HCT116 (cell line): ENCODE measurements at regions of chr18 and their contacts with region 1.

Region 1: DNA sequence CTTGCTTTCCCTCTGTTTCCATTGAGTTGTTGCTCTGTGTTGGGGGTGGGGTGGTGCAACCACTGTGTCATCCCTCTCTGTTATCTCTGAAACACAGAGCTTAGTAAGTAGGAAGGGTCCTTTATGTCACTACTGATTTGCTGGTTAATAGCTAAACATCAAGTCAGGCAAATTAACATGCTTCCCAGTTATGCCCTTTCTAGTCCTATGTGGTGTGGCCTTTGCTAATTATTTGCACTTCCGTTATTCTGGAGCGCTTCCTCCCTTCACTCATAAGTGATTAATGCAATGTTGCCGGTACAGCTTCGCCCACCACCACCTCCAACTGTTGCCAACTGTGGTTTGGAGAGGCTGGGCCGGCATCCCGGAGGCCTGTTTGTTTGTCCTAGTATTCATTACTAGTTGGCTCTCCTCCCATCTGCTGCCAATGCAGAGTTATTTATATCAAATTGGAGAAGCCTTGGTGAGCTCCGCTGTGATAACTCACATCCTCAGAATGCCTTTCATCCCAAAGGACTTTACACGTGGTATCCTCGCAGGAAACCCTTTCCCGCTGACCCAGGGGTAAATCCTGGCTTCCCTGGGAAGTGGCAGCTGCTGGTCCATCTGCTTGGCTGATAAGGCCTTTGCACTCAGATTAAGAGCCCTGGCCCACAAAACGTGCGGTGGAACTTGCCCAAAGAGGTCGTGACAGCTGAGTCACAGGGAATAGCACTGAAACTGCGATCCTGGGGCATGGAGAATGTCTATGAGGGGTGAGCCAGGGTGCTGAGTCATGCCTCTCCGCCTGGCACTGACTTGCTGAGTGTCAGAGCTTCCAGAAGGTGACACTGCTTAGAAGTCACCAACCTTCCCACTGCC is 72.0 kb upstream of the ZCCHC2 start:
- DNase-seq: peak; percentile 86
- ATAC-seq: peak; percentile 96
- H3K4me3 ChIP-seq: peak overlapping the region in 1 of 2 experiments; percentile 12; a peak in 2 of 4 replicates
- H3K27ac ChIP-seq: peak overlapping the region; percentile 83
- H3K4me1 ChIP-seq: peaks cover 30 to 36% of the 10 kb centered on the region in 2 experiments
- H3K27me3 ChIP-seq: no peaks in the 10 kb centered on the region
- CTCF ChIP-seq: 0 out of 6 replicates have a peak, but pooled peaks of 1 of the 3 experiments have one; percentile 7
- POLR2A ChIP-seq: no peak
- RAD21 ChIP-seq: no peak; the same call in 1 of the 2 replicates

Region 2: GRCh38 chr18:62486304-62486964 is 35.7 kb after region 1 on chr18:
- CTCF ChIA-PET with region 1: no interaction called
- POLR2A ChIA-PET with region 1: no interaction called
- RAD21 ChIA-PET with region 1: interaction called in 1 of 2 experiments, 5 read pairs
- intact Hi-C with region 1: loop called (anchors 5 kb)
- DNase-seq: peak; percentile 94
- ATAC-seq: peak; percentile 86
- H3K4me3 ChIP-seq: peak overlapping the region in 1 of 2 experiments; percentile 48; a peak in 2 of 4 replicates
- H3K27ac ChIP-seq: peak overlapping the region; percentile 78; the same call in 1 of the 2 replicates
- H3K4me1 ChIP-seq: peaks cover 20 to 33% of the 10 kb centered on the region in 2 experiments
- H3K27me3 ChIP-seq: no peaks in the 10 kb centered on the region
- CTCF ChIP-seq: no peak
- POLR2A ChIP-seq: no peak
- RAD21 ChIP-seq: no peak; the same call in 1 of the 2 replicates

Region 3: DNA sequence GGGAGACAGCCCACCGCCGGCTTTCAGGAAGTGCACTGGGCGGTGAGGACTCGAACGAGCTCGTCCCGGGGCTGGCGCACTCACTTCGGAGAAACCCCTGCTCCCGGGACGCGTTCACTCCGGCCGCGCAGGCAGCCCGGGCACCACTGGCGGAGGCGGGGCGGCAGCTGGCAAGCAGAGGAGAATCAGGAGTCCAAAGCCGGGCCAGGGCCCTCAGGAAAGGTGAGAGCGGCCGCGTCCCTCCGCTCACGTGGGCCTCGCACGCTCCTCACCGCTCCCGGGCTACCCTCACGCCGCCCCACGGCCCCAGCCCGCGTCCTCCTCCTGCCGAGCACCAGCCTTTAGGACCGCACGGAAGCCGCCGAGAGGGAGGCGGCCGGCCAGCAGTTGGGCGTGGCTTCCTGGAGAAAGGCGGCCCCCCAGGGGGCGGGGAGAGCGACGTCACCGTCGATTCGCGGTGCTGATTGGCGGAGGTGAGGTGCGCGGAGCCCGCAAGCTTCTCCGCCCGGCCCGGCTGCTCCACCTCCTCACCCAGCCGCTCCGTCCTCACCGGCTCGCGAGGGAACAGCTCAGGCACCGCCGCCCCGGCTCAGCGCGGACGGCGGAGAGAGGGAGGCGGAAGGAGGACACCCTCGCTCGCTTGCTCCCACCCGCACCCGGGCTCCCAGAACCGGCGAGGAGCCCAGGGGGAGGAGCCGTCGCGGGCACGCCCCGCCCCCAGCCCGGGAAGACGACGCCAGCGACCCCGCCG is 71.9 kb after region 1 on chr18 and contains the start of gene ZCCHC2:
- CTCF ChIA-PET with region 1: no interaction called
- POLR2A ChIA-PET with region 1: interaction called, 6 read pairs
- RAD21 ChIA-PET with region 1: no interaction called
- intact Hi-C with region 1: loop called (anchors 2 kb)
- DNase-seq: peak; percentile 94
- ATAC-seq: peak; percentile 83
- H3K4me3 ChIP-seq: peak within 1 kb of the TSS; percentile 76 to 83
- H3K27ac ChIP-seq: peak within 1 kb of the TSS; percentile 98
- H3K4me1 ChIP-seq: peaks cover 21 to 34% of the 10 kb centered on the region in 2 experiments
- H3K27me3 ChIP-seq: no peaks in the 10 kb centered on the region
- CTCF ChIP-seq: no peak
- POLR2A ChIP-seq: peak; percentile 58
- RAD21 ChIP-seq: no peak
- total RNA-seq, gene ZCCHC2: 17.7 TPM